ENCODE measurements at regions of chr2 and their contacts with region 1.

Region 1: DNA sequence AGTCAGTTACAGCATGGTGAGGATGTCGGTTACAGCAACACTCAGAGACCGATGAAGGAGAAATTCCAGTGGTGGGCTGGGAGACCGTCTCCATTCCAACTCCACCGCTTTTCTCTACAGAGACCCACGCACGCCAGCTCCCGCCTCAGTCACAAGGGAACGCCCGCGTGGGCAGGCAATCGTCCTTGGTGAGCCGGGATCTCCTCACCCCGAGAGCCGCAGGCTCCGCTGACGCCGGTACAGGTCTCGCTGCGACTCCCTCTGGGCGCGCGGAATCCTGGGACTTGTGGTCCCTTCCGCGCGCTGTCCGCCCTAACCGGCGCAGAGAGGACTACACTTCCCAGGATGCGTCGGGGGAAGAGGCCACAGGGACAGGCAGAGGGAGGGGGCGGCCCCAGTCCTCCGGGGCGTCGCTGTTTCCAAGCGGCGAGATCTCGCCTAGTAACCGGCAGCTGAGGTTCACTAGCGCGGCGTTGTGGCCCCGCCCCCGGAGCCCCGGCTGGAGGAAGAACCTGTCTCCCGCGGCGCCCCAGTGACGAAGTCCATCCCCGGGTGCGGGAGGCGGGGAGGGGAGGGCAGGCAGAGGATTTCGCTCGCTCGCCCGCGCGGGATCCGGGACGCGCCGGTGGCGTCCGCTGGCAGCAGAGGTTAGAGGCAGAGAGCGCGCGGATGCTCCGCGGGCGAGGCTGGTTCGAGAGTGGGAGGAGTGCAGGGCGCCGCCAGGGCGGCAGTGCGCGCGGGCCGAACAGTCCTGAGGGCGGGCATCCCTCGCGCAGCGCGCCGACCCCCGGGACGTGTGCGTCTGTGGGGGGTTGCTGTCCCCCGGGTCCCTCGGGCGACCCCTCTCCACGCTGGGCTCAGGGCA is at the start of gene EML6:
- DNase-seq: peak; percentile 94 to 100 (median 99)

Region 2: DNA sequence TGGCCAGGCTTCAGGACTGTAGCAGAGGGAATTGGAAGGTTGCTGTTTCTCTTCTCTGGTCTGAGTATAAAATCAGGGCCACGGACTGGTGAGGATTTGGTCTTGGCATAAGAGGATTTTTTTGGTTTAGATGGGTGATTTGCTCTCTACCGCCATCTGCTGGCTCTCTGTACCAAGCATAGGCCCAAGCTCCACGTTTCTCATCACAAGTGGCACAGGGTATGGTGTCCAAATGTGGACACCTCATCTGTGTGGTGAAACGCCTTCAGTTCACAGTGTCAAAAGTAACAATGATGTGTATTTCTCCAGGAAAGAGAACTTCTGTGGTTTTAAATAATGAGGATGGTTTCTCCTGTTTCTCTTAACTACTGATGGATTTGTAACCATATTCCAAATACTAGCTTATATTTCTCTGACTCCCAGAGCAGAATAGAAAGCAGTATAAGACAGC is 115.2 kb after region 1 on chr2:
- intact Hi-C with region 1: loop called (anchors 10 kb)
- DNase-seq: peak; percentile 7 to 91 (median 76)